ENCODE measurements at regions of chr9 and their contacts with region 1.

Region 1: DNA sequence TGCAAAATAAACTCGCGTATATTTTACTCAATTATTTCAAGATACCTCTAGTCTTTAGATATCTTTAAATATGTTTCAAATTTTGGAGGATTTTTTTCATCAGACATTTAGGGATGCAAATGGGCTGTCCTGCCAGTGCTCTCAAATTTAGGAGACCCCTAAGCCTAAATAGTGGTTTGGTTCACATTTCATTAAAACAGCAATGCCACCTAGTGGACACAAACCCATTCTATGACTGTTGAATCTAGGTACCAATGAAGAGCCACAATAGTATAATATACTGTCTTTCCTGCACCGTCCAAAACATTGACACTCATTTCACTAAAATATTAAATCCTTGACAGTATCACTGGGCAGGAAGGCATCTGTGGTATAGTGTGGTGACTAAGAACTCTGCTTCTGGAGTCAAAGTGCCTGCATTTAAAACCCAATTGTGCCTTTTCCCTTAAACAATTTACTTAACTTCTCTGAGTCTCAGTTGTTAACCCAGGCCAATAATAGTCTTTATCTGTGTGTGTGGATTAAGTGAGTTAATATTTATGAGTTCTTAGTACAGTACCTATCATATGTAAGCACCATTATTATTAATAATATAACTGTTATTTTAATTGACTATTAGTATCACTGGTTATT is 148.0 kb downstream of the RORB start:
- DNase-seq: no peak
- H3K4me3 Mint-ChIP-seq: no peak overlapping the region
- H3K27ac Mint-ChIP-seq: no peak overlapping the region
- H3K4me1 Mint-ChIP-seq: no peaks in the 10 kb centered on the region
- H3K27me3 Mint-ChIP-seq: peaks cover 6% of the 10 kb centered on the region

Region 2: GRCh38 chr9:73683862-73684591 is 961.1 kb before region 1 on chr9:
- intact Hi-C with region 1: loop called (anchors 10 kb)
- DNase-seq: no peak
- H3K4me3 Mint-ChIP-seq: no peak overlapping the region
- H3K27ac Mint-ChIP-seq: no peak overlapping the region
- H3K4me1 Mint-ChIP-seq: no peaks in the 10 kb centered on the region
- H3K27me3 Mint-ChIP-seq: no peaks in the 10 kb centered on the region

Region 3: DNA sequence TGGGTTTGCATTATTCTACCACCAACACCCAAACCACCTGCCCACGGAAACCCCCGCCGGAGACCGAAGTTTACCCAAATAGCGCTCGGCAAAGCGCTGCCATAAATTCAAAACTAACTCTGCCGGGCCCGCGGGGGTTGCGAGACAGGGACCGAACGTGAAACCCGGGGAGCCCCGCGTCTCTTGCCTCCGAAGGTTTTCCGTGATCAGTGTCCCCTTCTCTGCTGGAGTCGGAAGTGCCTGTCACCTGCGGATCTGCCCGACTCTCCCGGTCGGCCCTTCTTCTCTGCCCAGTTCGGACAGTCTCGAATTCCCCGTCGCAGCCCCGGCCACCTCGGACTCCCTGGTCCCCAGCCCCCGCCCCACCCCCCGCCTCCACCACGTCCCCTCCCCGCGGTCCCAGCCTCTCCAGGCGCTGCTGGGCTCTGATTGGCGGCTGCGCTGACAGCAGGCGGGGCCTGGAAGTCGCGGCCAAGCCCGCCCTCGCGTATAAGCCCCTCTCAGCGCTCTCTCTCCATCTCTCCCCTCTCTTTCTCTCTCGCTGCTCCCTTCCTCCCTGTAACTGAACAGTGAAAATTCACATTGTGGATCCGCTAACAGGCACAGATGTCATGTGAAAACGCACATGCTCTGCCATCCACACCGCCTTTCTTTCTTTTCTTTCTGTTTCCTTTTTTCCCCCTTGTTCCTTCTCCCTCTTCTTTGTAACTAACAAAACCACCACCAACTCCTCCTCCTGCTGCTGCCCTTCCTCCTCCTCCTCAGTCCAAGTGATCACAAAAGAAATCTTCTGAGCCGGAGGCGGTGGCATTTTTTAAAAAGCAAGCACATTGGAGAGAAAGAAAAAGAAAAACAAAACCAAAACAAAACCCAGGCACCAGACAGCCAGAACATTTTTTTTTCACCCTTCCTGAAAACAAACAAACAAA is 148.0 kb before region 1 on chr9 and contains the start of gene RORB:
- intact Hi-C with region 1: no loop called
- DNase-seq: peak; percentile 28
- H3K4me3 Mint-ChIP-seq: peak within 1 kb of the TSS; percentile 86
- H3K27ac Mint-ChIP-seq: peak within 1 kb of the TSS; percentile 52
- H3K4me1 Mint-ChIP-seq: peaks cover 35% of the 10 kb centered on the region
- H3K27me3 Mint-ChIP-seq: peaks cover 59% of the 10 kb centered on the region
- total RNA-seq, gene RORB: 0.05 TPM in 1 of 2 replicates, not detected in the other

Measured in activated T-helper 1 cell treated with anti-CD3 and anti-CD28 coated beads, Interleukin-12 subunit alpha, Interleukin-12 subunit beta, Interleukin-2, Interleukin-4 antibody, amounts not matched to agents 30 ng/mL and 10 ng/mL and 1 ng/mL, durations not matched to agents 14 hours and 24 hours and 36 hours (primary cell).